PC-3 (cell line): ENCODE measurements at regions of chr7 and their contacts with region 1.

Region 1: DNA sequence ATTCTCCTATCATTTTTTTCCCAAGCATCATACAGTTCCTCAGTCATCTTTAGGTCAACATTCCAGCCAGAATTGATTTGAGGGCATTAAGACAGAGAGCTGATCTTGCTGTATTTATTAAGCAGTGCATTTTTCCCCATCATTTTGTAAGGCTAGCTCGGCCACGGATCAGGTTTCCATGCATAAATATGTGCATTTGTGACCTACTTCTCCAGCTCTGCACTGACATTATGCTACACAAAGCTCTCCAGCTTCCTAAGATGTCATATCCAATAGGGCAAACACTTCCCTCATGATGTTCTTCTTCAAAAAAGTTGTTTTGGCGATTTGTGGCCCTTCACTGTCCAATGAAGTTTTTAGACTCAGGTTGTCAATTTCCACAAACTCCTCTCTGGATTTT is 202.6 kb downstream of the C7orf25 start:
- DNase-seq: no peak
- ATAC-seq: no peak
- H3K4me3 ChIP-seq: no peak overlapping the region
- H3K27ac ChIP-seq: no peak overlapping the region
- H3K4me1 ChIP-seq: no peaks in the 10 kb centered on the region
- H3K27me3 ChIP-seq: no peaks in the 10 kb centered on the region; the same call in 1 of the 2 replicates
- CTCF ChIP-seq: no peak

Region 2: GRCh38 chr7:42722716-42723115 is 13.4 kb after region 1 on chr7:
- CTCF ChIA-PET with region 1: no interaction called
- POLR2A ChIA-PET with region 1: interaction called, 16 read pairs
- intact Hi-C with region 1: no loop called
- DNase-seq: no peak
- ATAC-seq: no peak
- H3K4me3 ChIP-seq: no peak overlapping the region
- H3K27ac ChIP-seq: no peak overlapping the region
- H3K4me1 ChIP-seq: no peaks in the 10 kb centered on the region
- H3K27me3 ChIP-seq: no peaks in the 10 kb centered on the region
- CTCF ChIP-seq: no peak